HCT116 (cell line): ENCODE measurements at regions of chr2 and their contacts with region 1.

Region 1: GRCh38 chr2:235116885-235117492 is 165.2 kb downstream of the SH3BP4 start:
- DNase-seq: peak; percentile 32
- ATAC-seq: peak; percentile 63
- H3K4me3 ChIP-seq: no peak overlapping the region
- H3K27ac ChIP-seq: no peak overlapping the region
- H3K4me1 ChIP-seq: 0 out of 4 replicates have a peak, but pooled peaks cover 0 to 4% of the 10 kb centered on the region in 2 experiments
- H3K27me3 ChIP-seq: no peaks in the 10 kb centered on the region
- CTCF ChIP-seq: peak; percentile 35 to 82 (median 76); a peak in 5 of 6 replicates
- POLR2A ChIP-seq: no peak
- RAD21 ChIP-seq: peak; percentile 92

Region 2: DNA sequence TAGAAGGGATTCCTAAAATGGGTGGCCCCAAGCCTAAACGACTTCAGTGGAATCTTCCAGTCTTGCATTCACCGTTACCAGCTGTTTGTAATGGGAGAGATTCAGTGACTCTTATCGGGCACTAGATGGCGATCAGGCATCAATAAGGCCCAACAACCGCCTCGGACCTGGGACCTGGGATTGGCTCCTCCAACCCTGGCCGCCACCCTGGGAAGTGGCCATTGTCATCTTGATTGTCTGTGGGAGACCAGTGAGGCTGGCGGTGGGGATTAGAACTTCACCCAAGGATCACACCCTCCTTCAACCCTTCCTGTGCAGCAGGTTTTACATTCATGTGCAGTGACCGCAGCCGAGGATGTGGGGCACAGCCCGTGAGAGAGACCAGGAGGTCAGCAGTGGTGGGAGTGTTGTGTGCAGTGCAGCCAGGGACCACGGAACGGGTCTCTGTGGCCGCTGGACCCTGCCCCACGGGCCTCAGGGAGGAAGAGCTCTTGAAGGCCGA is 981.2 kb before region 1 on chr2:
- CTCF ChIA-PET with region 1: interaction called, 5 read pairs
- POLR2A ChIA-PET with region 1: no interaction called
- RAD21 ChIA-PET with region 1: no interaction called
- intact Hi-C with region 1: loop called (anchors 5 kb)
- DNase-seq: peak; percentile 73
- ATAC-seq: peak; percentile 97
- H3K4me3 ChIP-seq: no peak overlapping the region
- H3K27ac ChIP-seq: peak overlapping the region; percentile 15; the same call in 1 of the 2 replicates
- H3K4me1 ChIP-seq: peaks cover 8 to 33% of the 10 kb centered on the region in 2 experiments; a peak in 3 of 4 replicates
- H3K27me3 ChIP-seq: no peaks in the 10 kb centered on the region
- CTCF ChIP-seq: peak; percentile 82 to 91 (median 89)
- POLR2A ChIP-seq: no peak
- RAD21 ChIP-seq: peak; percentile 99

Region 3: GRCh38 chr2:234500394-234501006 is 616.5 kb before region 1 on chr2:
- CTCF ChIA-PET with region 1: interaction called, 12 read pairs
- POLR2A ChIA-PET with region 1: no interaction called
- RAD21 ChIA-PET with region 1: interaction called in 1 of 2 experiments, 5 read pairs
- intact Hi-C with region 1: no loop called
- DNase-seq: peak; percentile 49
- ATAC-seq: peak; percentile 60
- H3K4me3 ChIP-seq: no peak overlapping the region
- H3K27ac ChIP-seq: no peak overlapping the region
- H3K4me1 ChIP-seq: peaks cover 24 to 29% of the 10 kb centered on the region in 2 experiments
- H3K27me3 ChIP-seq: no peaks in the 10 kb centered on the region
- CTCF ChIP-seq: peak; percentile 42 to 82 (median 69); a peak in 5 of 6 replicates
- POLR2A ChIP-seq: no peak
- RAD21 ChIP-seq: peak; percentile 94

Region 4: DNA sequence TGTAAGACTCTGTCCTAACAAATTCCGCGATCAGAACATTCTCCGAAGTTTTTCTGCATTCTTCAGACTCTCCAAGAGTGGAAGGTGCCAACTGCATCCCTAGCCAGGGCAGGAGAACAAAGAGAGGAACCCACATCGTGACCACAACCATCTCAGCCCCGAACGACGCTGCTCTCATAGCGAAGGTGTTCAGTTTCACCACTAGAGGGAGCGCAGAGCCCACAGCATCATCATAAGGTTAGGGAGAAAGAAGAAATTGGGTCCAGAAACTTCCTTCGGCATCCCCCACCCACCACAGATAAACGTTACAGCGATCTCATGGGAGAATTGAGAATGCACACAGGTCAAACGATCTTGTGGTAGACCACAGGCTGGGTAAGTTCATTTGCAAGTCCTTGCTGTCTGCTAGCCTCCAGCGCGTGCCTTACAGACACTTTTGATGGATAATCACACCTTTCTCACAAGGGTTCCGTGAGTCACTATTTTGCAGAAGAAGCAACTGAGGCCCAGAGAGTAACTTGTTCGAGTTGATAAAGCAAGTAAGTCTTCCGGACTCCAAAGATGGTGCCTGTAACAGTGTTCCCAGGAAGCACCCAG is 566.4 kb before region 1 on chr2:
- CTCF ChIA-PET with region 1: interaction called, 44 read pairs
- POLR2A ChIA-PET with region 1: interaction called, 6 read pairs
- RAD21 ChIA-PET with region 1: interaction called, 6 read pairs
- intact Hi-C with region 1: loop called (anchors 1 kb)
- DNase-seq: peak; percentile 66
- ATAC-seq: peak; percentile 96
- H3K4me3 ChIP-seq: no peak overlapping the region
- H3K27ac ChIP-seq: no peak overlapping the region
- H3K4me1 ChIP-seq: peaks cover 0 to 10% of the 10 kb centered on the region in 2 experiments; a peak in 1 of 4 replicates
- H3K27me3 ChIP-seq: no peaks in the 10 kb centered on the region
- CTCF ChIP-seq: peak; percentile 88 to 94 (median 90)
- POLR2A ChIP-seq: no peak
- RAD21 ChIP-seq: peak; percentile 99

Region 5: DNA sequence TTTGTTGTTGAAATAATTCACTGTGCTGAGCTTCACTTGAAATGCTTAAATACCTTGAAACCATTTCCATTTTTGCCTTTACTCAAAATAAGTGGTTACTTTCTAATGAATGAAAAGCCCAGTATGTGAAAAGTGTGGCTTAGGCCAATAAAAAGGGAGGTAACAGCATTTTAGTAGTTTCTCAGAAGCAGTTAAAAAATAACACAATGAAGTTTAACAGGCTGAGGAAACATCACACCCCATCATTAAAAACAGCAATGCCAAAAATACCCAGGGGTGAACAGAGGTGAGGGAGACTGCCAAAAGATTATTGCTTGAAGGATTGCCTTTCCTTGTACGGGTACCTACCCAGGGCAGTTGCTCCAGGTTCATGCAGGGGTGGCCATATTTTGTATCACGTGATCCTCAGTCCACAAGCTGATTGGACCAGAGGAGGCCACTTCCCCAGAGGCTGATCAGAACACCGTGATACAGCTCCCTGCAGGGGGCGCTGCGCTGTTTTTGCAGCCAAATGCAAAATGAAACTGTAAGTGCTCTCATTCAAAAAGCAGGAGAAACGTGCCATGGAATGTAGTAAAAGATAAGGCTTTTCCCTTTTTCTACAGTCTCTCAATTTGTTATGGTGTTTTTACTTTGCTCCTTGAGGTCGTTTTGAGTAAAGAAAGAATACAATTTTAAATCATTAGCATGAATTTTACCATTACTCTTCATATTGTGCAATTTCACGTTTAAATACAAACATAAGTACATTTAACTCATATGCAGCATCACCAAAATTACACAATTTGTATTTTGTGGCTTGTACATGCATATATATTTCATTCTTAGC is 235.4 kb before region 1 on chr2:
- CTCF ChIA-PET with region 1: interaction called, 10 read pairs
- POLR2A ChIA-PET with region 1: no interaction called
- RAD21 ChIA-PET with region 1: no interaction called
- intact Hi-C with region 1: no loop called
- DNase-seq: peak; percentile 94
- ATAC-seq: peak; percentile 87
- H3K4me3 ChIP-seq: peak overlapping the region; percentile 52
- H3K27ac ChIP-seq: peak overlapping the region; percentile 63
- H3K4me1 ChIP-seq: peaks cover 30 to 37% of the 10 kb centered on the region in 2 experiments
- H3K27me3 ChIP-seq: no peaks in the 10 kb centered on the region
- CTCF ChIP-seq: peak; percentile 75 to 97 (median 95); a peak in 5 of 6 replicates
- POLR2A ChIP-seq: no peak
- RAD21 ChIP-seq: peak; percentile 84